ENCODE measurements at regions of chr9 and their contacts with region 1.

Region 1: DNA sequence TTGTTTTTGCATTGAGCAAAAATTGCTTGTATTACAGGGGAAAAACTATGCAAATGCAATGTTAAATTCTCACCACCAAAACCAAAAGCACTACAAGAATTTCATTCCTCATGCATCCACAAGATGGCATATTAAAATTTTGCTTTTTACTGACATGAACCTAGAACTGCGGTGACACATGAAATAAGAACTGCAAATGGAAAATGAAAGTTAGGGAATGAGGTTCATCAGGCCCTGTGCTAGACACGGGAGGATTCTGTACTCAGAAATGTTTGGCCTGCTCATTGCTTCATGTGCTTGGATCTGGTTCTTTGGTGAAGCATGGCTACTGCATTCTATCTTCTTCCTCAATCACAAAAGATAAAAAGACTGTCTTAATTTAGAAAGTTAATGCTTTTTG is 9.1 kb upstream of the RFK start:
- DNase-seq: peak in 7 of 9 donors; percentile 39 to 64 (median 51)
- ATAC-seq: peak; percentile 94
- H3K4me3 ChIP-seq: peak overlapping the region; percentile 48
- H3K4me3 Mint-ChIP-seq: peak overlapping the region; percentile 48 to 82 (median 70)
- H3K27ac ChIP-seq: peak overlapping the region; percentile 32
- H3K27ac Mint-ChIP-seq: peak overlapping the region; percentile 67 to 92 (median 77)
- H3K4me1 ChIP-seq: peaks cover 0 to 8% of the 10 kb centered on the region in 2 donors
- H3K4me1 Mint-ChIP-seq: peaks cover 6 to 35% (median 9%) of the 10 kb centered on the region in 7 donors
- H3K27me3 ChIP-seq: no peaks in the 10 kb centered on the region
- H3K27me3 Mint-ChIP-seq: no peaks in the 10 kb centered on the region

Region 2: GRCh38 chr9:76255781-76256455 is 147.4 kb before region 1 on chr9:
- CTCF ChIA-PET with region 1: no interaction called
- POLR2A ChIA-PET with region 1: no interaction called
- intact Hi-C with region 1: no loop called
- DNase-seq: no peak
- ATAC-seq: no peak
- H3K4me3 ChIP-seq: no peak overlapping the region
- H3K4me3 Mint-ChIP-seq: no peak overlapping the region
- H3K27ac ChIP-seq: no peak overlapping the region
- H3K27ac Mint-ChIP-seq: no peak overlapping the region
- H3K4me1 ChIP-seq: no peaks in the 10 kb centered on the region
- H3K4me1 Mint-ChIP-seq: peaks cover 0 to 1% (median 0%) of the 10 kb centered on the region in 7 donors
- H3K27me3 ChIP-seq: no peaks in the 10 kb centered on the region
- H3K27me3 Mint-ChIP-seq: peaks cover 0 to 10% (median 2%) of the 10 kb centered on the region in 5 donors

Region 3: DNA sequence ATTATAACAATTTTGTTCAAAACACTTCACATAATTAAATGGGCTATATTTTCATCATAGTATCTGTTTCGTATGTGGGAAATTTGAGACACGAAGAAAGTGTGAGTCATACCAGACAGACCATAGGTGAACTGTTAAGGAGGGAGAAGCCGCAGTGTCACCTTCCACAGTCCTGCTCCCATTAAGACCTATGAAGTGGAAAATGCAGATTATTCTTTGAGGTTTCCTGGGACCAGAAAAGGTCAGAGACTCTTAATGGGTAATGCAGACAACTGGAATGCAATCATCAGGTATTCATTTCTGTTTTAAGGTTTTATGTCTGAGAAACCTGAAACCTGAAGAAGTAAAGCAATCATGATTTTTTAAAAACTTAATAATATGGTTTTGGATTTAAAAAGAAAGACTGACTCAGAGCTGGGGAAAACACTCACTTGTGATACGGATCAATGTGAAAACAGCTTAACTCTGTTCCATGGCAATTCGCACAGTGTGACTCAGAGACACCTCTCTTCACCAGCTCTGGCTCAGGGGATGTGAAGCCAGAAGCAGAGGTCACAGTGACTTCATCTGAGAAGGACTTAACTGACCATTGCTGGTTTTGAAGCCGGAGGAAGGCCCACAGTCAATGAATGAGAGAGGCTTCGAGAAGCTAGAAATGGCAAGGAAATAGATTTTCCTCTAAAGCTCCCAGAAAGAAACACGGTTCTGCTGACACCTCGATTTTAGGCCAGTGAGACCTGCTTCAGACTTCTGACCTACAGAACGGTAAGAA is 38.4 kb after region 1 on chr9:
- CTCF ChIA-PET with region 1: interaction called, 6 read pairs
- POLR2A ChIA-PET with region 1: no interaction called
- intact Hi-C with region 1: loop called in 1 of 2 experiments (anchors 1 kb)
- DNase-seq: peak in 1 of 9 donors; percentile 51
- ATAC-seq: no peak
- H3K4me3 ChIP-seq: no peak overlapping the region
- H3K4me3 Mint-ChIP-seq: peak overlapping the region in 1 of 10 donors; percentile 41
- H3K27ac ChIP-seq: no peak overlapping the region
- H3K27ac Mint-ChIP-seq: peak overlapping the region in 1 of 9 donors; percentile 79
- H3K4me1 ChIP-seq: no peaks in the 10 kb centered on the region
- H3K4me1 Mint-ChIP-seq: peaks cover 0 to 37% (median 0%) of the 10 kb centered on the region in 7 donors
- H3K27me3 ChIP-seq: no peaks in the 10 kb centered on the region
- H3K27me3 Mint-ChIP-seq: peaks cover 0 to 4% (median 0%) of the 10 kb centered on the region in 5 donors

Region 4: DNA sequence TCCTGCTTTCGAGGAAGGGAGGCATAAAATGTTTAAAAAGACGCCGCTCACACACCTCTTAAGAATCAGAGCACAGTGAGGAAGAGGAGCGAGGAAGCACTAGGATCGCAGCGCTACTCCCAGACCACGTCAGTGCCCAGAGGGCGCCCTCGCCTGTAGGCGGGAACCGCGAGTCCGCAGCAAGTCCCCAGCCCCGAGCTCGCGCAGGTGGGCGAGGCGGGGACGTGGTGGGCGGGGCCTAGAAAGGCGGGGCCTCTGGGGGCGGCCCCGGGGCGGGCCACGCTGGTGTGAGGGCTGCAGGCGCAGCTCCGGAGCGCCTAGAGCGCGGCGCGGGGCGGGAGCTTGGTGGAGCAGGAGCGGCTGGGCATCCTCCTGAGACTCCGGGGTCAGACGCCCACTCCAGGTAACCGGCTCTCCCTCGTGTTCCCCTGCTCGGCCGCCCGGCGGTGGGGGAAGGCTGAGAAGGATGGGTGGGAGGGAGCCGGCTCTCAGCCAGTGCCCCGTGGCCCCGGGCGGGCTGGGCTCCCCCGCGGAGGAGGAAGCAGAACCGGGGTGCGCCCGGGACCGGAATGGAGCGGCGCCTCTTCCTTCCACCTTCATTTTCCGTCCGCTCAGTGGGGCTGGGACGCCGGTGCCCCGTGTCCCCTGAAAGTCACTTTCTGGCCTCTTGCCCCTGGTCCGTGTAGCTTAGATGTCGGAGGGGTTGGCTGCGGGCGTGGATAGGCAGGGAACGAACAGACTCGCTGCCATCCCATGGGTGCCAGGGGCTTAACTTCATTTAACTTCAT is 55.7 kb after region 1 on chr9 and contains the start of gene GCNT1:
- CTCF ChIA-PET with region 1: interaction called, 4 read pairs
- POLR2A ChIA-PET with region 1: no interaction called
- intact Hi-C with region 1: loop called in 1 of 2 experiments (anchors 2 kb)
- DNase-seq: peak; percentile 78 to 98 (median 86)
- ATAC-seq: peak; percentile 98
- H3K4me3 ChIP-seq: peak within 1 kb of the TSS; percentile 92
- H3K4me3 Mint-ChIP-seq: peak within 1 kb of the TSS; percentile 81 to 96 (median 92)
- H3K27ac ChIP-seq: no peak within 1 kb of the TSS
- H3K27ac Mint-ChIP-seq: peak within 1 kb of the TSS in 8 of 9 donors; percentile 7 to 81 (median 61)
- H3K4me1 ChIP-seq: peaks cover 3 to 11% of the 10 kb centered on the region in 2 donors
- H3K4me1 Mint-ChIP-seq: peaks cover 16 to 34% (median 20%) of the 10 kb centered on the region in 7 donors
- H3K27me3 ChIP-seq: no peaks in the 10 kb centered on the region
- H3K27me3 Mint-ChIP-seq: peaks cover 0 to 3% (median 0%) of the 10 kb centered on the region in 5 donors
- total RNA-seq, gene GCNT1: 1.4 to 8.9 (median 1.7) TPM

Region 5: GRCh38 chr9:76704593-76705204 is 301.3 kb after region 1 on chr9:
- CTCF ChIA-PET with region 1: interaction called, 3 read pairs
- POLR2A ChIA-PET with region 1: no interaction called
- intact Hi-C with region 1: loop called (anchors 1 kb)
- DNase-seq: peak in 7 of 9 donors; percentile 12 to 55 (median 35)
- ATAC-seq: peak; percentile 63
- H3K4me3 ChIP-seq: no peak overlapping the region
- H3K4me3 Mint-ChIP-seq: no peak overlapping the region
- H3K27ac ChIP-seq: no peak overlapping the region
- H3K27ac Mint-ChIP-seq: no peak overlapping the region
- H3K4me1 ChIP-seq: no peaks in the 10 kb centered on the region
- H3K4me1 Mint-ChIP-seq: peaks cover 0 to 16% (median 1%) of the 10 kb centered on the region in 7 donors
- H3K27me3 ChIP-seq: no peaks in the 10 kb centered on the region
- H3K27me3 Mint-ChIP-seq: peaks cover 35 to 51% (median 40%) of the 10 kb centered on the region in 5 donors

Region 6: GRCh38 chr9:78144663-78145377 is 1741.5 kb after region 1 on chr9:
- CTCF ChIA-PET with region 1: no interaction called
- POLR2A ChIA-PET with region 1: no interaction called
- intact Hi-C with region 1: no loop called
- DNase-seq: no peak
- ATAC-seq: no peak
- H3K4me3 ChIP-seq: no peak overlapping the region
- H3K4me3 Mint-ChIP-seq: no peak overlapping the region
- H3K27ac ChIP-seq: no peak overlapping the region
- H3K27ac Mint-ChIP-seq: peak overlapping the region in 1 of 9 donors; percentile 35
- H3K4me1 ChIP-seq: no peaks in the 10 kb centered on the region
- H3K4me1 Mint-ChIP-seq: peaks cover 0 to 12% (median 0%) of the 10 kb centered on the region in 7 donors
- H3K27me3 ChIP-seq: no peaks in the 10 kb centered on the region
- H3K27me3 Mint-ChIP-seq: no peaks in the 10 kb centered on the region